Naive thymus-derived CD4-positive, alpha-beta T cell (primary cell): ENCODE measurements at regions of chr1 and their contacts with region 1.

Region 1: GRCh38 chr1:114346480-114347029 is 164.4 kb downstream of the TRIM33 start:
- DNase-seq: peak; percentile 91 to 99 (median 98)
- ATAC-seq: peak; percentile 100
- H3K4me3 ChIP-seq: peak overlapping the region; percentile 65
- H3K4me3 Mint-ChIP-seq: peak overlapping the region; percentile 89 to 98 (median 92)
- H3K27ac ChIP-seq: peak overlapping the region; percentile 53
- H3K27ac Mint-ChIP-seq: peak overlapping the region; percentile 86 to 99 (median 91)
- H3K4me1 ChIP-seq: peaks cover 29 to 38% of the 10 kb centered on the region in 2 donors
- H3K4me1 Mint-ChIP-seq: peaks cover 23 to 46% (median 33%) of the 10 kb centered on the region in 7 donors
- H3K27me3 ChIP-seq: no peaks in the 10 kb centered on the region
- H3K27me3 Mint-ChIP-seq: no peaks in the 10 kb centered on the region

Region 2: GRCh38 chr1:112715264-112716053 is 1631.1 kb before region 1 on chr1 and contains the start of gene PPM1J:
- CTCF ChIA-PET with region 1: no interaction called
- POLR2A ChIA-PET with region 1: no interaction called
- intact Hi-C with region 1: loop called in 1 of 2 experiments (anchors 10 kb)
- DNase-seq: peak; percentile 86 to 99 (median 91)
- ATAC-seq: peak; percentile 89
- H3K4me3 ChIP-seq: peak within 1 kb of the TSS; percentile 81
- H3K4me3 Mint-ChIP-seq: peak within 1 kb of the TSS; percentile 86 to 95 (median 92)
- H3K27ac ChIP-seq: peak within 1 kb of the TSS; percentile 34
- H3K27ac Mint-ChIP-seq: peak within 1 kb of the TSS in 8 of 9 donors; percentile 63 to 91 (median 82)
- H3K4me1 ChIP-seq: peaks cover 13% of the 10 kb centered on the region in 2 donors
- H3K4me1 Mint-ChIP-seq: peaks cover 17 to 37% (median 21%) of the 10 kb centered on the region in 7 donors
- H3K27me3 ChIP-seq: no peaks in the 10 kb centered on the region
- H3K27me3 Mint-ChIP-seq: peaks cover 0 to 45% (median 12%) of the 10 kb centered on the region in 5 donors
- total RNA-seq, gene PPM1J: 0.46 to 1.6 (median 0.50) TPM in 3 of 5 experiments, not detected in the others

Region 3: DNA sequence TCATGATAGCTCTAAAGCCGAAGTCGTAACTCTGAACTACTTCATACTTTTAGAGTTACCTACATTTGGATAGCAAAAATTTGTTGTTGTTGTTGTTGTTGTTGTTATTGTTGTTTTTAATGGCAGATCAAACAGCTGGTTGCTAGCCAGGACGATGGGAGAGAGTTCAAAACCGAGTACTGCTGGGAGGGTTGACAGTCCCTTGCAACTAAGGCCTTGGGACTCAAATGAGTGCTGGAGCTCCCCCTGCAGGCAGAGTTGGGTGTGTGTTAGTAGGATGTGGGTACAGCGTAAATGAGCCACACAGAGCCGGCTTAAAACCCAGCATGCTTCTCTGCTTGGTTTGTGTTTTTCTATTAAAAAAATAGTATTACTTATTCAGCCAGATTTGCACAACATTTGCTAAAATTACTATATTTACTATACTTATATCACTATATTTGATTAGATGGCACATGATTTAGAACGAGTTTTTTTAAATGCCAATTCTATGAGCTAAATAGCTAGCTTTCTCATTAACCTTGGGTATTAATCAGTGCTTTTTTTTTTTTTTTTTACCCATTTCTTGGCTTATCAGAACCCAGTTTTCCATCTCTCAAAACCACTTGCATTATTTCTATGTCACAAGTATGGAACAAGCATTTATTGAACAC is 63.7 kb before region 1 on chr1:
- CTCF ChIA-PET with region 1: interaction called, 9 read pairs
- POLR2A ChIA-PET with region 1: no interaction called
- intact Hi-C with region 1: loop called in 1 of 2 experiments (anchors 2 kb)
- DNase-seq: peak; percentile 65 to 84 (median 78)
- ATAC-seq: peak; percentile 99
- H3K4me3 ChIP-seq: no peak overlapping the region
- H3K4me3 Mint-ChIP-seq: no peak overlapping the region
- H3K27ac ChIP-seq: no peak overlapping the region
- H3K27ac Mint-ChIP-seq: no peak overlapping the region
- H3K4me1 ChIP-seq: no peaks in the 10 kb centered on the region
- H3K4me1 Mint-ChIP-seq: peaks cover 0 to 9% (median 0%) of the 10 kb centered on the region in 7 donors
- H3K27me3 ChIP-seq: no peaks in the 10 kb centered on the region
- H3K27me3 Mint-ChIP-seq: peaks cover 0 to 25% (median 0%) of the 10 kb centered on the region in 5 donors

Region 4: GRCh38 chr1:114511032-114511785 is 164.7 kb after region 1 on chr1 and contains the start of gene TRIM33:
- CTCF ChIA-PET with region 1: interaction called, 6 read pairs
- POLR2A ChIA-PET with region 1: interaction called, 5 read pairs
- intact Hi-C with region 1: loop called (anchors 1 to 2 kb)
- DNase-seq: peak; percentile 91 to 95 (median 93)
- ATAC-seq: peak; percentile 89
- H3K4me3 ChIP-seq: peak within 1 kb of the TSS; percentile 71
- H3K4me3 Mint-ChIP-seq: peak within 1 kb of the TSS; percentile 86 to 99 (median 97)
- H3K27ac ChIP-seq: peak within 1 kb of the TSS; percentile 100
- H3K27ac Mint-ChIP-seq: peak within 1 kb of the TSS; percentile 98 to 100 (median 99)
- H3K4me1 ChIP-seq: peaks cover 22 to 29% of the 10 kb centered on the region in 2 donors
- H3K4me1 Mint-ChIP-seq: peaks cover 41 to 63% (median 52%) of the 10 kb centered on the region in 7 donors
- H3K27me3 ChIP-seq: no peaks in the 10 kb centered on the region
- H3K27me3 Mint-ChIP-seq: peaks cover 0 to 7% (median 0%) of the 10 kb centered on the region in 5 donors
- total RNA-seq, gene TRIM33: 43.8 to 57.6 (median 51.1) TPM

Region 5: GRCh38 chr1:114716304-114717170 is 370.0 kb after region 1 on chr1 and contains the start of gene NRAS:
- CTCF ChIA-PET with region 1: no interaction called
- POLR2A ChIA-PET with region 1: interaction called, 3 read pairs
- intact Hi-C with region 1: loop called (anchors 1 kb)
- DNase-seq: peak; percentile 90 to 96 (median 94)
- ATAC-seq: peak; percentile 98
- H3K4me3 ChIP-seq: peak within 1 kb of the TSS; percentile 98
- H3K4me3 Mint-ChIP-seq: peak within 1 kb of the TSS; percentile 91 to 100 (median 96)
- H3K27ac ChIP-seq: peak within 1 kb of the TSS; percentile 98
- H3K27ac Mint-ChIP-seq: peak within 1 kb of the TSS; percentile 93 to 99 (median 97)
- H3K4me1 ChIP-seq: peaks cover 17 to 20% of the 10 kb centered on the region in 2 donors
- H3K4me1 Mint-ChIP-seq: peaks cover 10 to 34% (median 25%) of the 10 kb centered on the region in 7 donors
- H3K27me3 ChIP-seq: no peaks in the 10 kb centered on the region
- H3K27me3 Mint-ChIP-seq: no peaks in the 10 kb centered on the region
- total RNA-seq, gene NRAS: 22.3 to 56.0 (median 25.0) TPM

Region 6: GRCh38 chr1:114737314-114737849 is 390.8 kb after region 1 on chr1:
- CTCF ChIA-PET with region 1: no interaction called
- POLR2A ChIA-PET with region 1: no interaction called
- intact Hi-C with region 1: no loop called
- DNase-seq: no peak
- ATAC-seq: no peak
- H3K4me3 ChIP-seq: no peak overlapping the region
- H3K4me3 Mint-ChIP-seq: no peak overlapping the region
- H3K27ac ChIP-seq: no peak overlapping the region
- H3K27ac Mint-ChIP-seq: peak overlapping the region in 1 of 9 donors; percentile 39
- H3K4me1 ChIP-seq: no peaks in the 10 kb centered on the region
- H3K4me1 Mint-ChIP-seq: peaks cover 11 to 46% (median 26%) of the 10 kb centered on the region in 7 donors
- H3K27me3 ChIP-seq: no peaks in the 10 kb centered on the region
- H3K27me3 Mint-ChIP-seq: no peaks in the 10 kb centered on the region

Region 7: GRCh38 chr1:115052454-115053083 is 706.0 kb after region 1 on chr1:
- CTCF ChIA-PET with region 1: interaction called, 4 read pairs
- POLR2A ChIA-PET with region 1: no interaction called
- intact Hi-C with region 1: loop called (anchors 1 to 2 kb)
- DNase-seq: peak in 8 of 9 donors; percentile 18 to 58 (median 47)
- ATAC-seq: peak; percentile 94
- H3K4me3 ChIP-seq: no peak overlapping the region
- H3K4me3 Mint-ChIP-seq: no peak overlapping the region
- H3K27ac ChIP-seq: no peak overlapping the region
- H3K27ac Mint-ChIP-seq: no peak overlapping the region
- H3K4me1 ChIP-seq: no peaks in the 10 kb centered on the region
- H3K4me1 Mint-ChIP-seq: peaks cover 0 to 5% (median 4%) of the 10 kb centered on the region in 7 donors
- H3K27me3 ChIP-seq: no peaks in the 10 kb centered on the region
- H3K27me3 Mint-ChIP-seq: peaks cover 0 to 12% (median 0%) of the 10 kb centered on the region in 5 donors